MCF 10A (cell line): ENCODE measurements at regions of chr6 and their contacts with region 1.

Region 1: GRCh38 chr6:102619585-102619984 is 1226.1 kb downstream of the GRIK2 start:
- DNase-seq: peak; percentile 53
- H3K4me3 Mint-ChIP-seq: no peak overlapping the region
- H3K27ac Mint-ChIP-seq: no peak overlapping the region
- H3K4me1 Mint-ChIP-seq: no peaks in the 10 kb centered on the region
- H3K27me3 Mint-ChIP-seq: no peaks in the 10 kb centered on the region
- CTCF ChIP-seq: peak; percentile 43

Region 2: GRCh38 chr6:101114703-101115102 is 1504.9 kb before region 1 on chr6:
- CTCF ChIA-PET with region 1: interaction called, 26 read pairs
- POLR2A ChIA-PET with region 1: no interaction called
- intact Hi-C with region 1: loop called (anchors 2 kb)
- DNase-seq: peak; percentile 60
- H3K4me3 Mint-ChIP-seq: no peak overlapping the region
- H3K27ac Mint-ChIP-seq: no peak overlapping the region
- H3K4me1 Mint-ChIP-seq: no peaks in the 10 kb centered on the region
- H3K27me3 Mint-ChIP-seq: no peaks in the 10 kb centered on the region
- CTCF ChIP-seq: peak; percentile 48

Region 3: GRCh38 chr6:102631921-102632320 is 12.3 kb after region 1 on chr6:
- CTCF ChIA-PET with region 1: interaction called, 11 read pairs
- POLR2A ChIA-PET with region 1: no interaction called
- intact Hi-C with region 1: no loop called
- DNase-seq: no peak
- H3K4me3 Mint-ChIP-seq: no peak overlapping the region
- H3K27ac Mint-ChIP-seq: no peak overlapping the region
- H3K4me1 Mint-ChIP-seq: no peaks in the 10 kb centered on the region
- H3K27me3 Mint-ChIP-seq: no peaks in the 10 kb centered on the region
- CTCF ChIP-seq: no peak

Region 4: DNA sequence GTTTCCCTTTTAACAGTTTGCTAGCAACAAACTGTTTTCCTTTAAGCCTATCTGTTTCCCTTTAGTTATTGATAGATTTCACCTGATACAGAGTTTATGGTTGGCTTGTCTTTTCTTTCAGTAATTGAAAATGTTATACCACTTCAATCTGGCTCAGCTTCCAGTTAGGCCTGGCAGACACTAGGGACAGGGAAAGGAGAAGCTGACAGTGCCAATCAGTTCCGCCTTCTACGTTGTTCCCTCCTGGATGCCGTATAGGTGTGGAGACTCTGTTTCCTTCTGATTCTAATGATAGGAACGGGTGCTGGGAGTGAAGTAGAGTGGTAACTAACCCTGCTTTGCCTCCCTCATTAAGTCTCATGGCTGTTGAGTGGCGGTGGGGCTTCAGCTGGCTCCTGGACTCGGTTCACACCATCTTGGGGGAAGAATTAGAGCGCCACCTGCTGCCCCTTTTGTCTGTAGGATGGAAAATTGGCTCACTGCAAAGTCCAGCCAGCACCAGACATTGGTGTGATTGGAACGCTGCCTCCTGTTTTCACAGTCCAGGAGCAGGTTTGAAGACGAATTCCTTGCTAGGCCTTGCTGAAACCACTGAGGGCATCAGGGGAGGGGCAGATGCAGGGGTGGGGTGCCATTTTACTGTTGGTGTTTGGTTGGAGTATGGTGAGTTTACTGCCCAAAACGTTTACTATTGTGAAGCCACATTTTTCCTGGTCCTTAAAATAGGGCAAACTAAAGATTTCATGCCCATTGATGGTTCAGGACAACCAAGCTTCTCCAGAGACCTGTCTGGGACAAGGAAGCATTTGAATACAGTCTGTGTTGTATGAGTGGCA is 503.4 kb after region 1 on chr6:
- CTCF ChIA-PET with region 1: interaction called, 6 read pairs
- POLR2A ChIA-PET with region 1: no interaction called
- intact Hi-C with region 1: loop called (anchors 5 kb)
- DNase-seq: peak; percentile 76
- H3K4me3 Mint-ChIP-seq: no peak overlapping the region
- H3K27ac Mint-ChIP-seq: no peak overlapping the region
- H3K4me1 Mint-ChIP-seq: peaks cover 12% of the 10 kb centered on the region
- H3K27me3 Mint-ChIP-seq: no peaks in the 10 kb centered on the region
- CTCF ChIP-seq: peak; percentile 75